Esophagus muscularis mucosa (tissue), 4 donors: ENCODE measurements at regions of chr16 and their contacts with region 1.

Region 1: GRCh38 chr16:76653390-76654026 is 376.3 kb downstream of the CNTNAP4 start:
- DNase-seq: no peak
- H3K4me3 ChIP-seq: no peak overlapping the region
- H3K27ac ChIP-seq: no peak overlapping the region
- H3K4me1 ChIP-seq: no peaks in the 10 kb centered on the region
- H3K27me3 ChIP-seq: no peaks in the 10 kb centered on the region
- CTCF ChIP-seq: peak in 2 of 3 experiments; percentile 23 to 52
- EP300 ChIP-seq: no peak
- POLR2A ChIP-seq: no peak

Region 2: GRCh38 chr16:75794426-75794825 is 859.1 kb before region 1 on chr16:
- intact Hi-C with region 1: loop called (anchors 5 kb)
- DNase-seq: no peak
- H3K4me3 ChIP-seq: no peak overlapping the region
- H3K27ac ChIP-seq: no peak overlapping the region
- H3K4me1 ChIP-seq: no peaks in the 10 kb centered on the region
- H3K27me3 ChIP-seq: peaks cover 0 to 4% (median 0%) of the 10 kb centered on the region in 4 donors
- CTCF ChIP-seq: no peak
- EP300 ChIP-seq: no peak
- POLR2A ChIP-seq: no peak

Region 3: DNA sequence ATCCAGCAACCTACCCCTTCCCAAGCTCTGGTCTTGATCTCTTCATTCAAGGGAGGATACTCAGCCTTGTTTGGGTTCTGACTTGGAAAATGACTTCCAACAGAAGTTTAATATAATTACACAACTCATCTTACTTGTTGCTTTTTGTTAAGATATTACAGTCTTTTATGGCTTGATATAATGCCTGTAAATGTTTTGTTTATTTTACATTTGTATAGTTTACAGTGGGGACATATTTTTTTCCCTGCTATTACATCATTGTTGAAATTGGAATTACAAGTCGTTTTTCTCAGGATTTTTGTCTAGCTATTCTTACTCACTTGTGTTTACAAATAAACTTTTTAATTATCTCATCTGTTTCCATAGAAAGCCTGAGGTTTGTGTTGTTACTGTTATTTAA is 59.7 kb after region 1 on chr16:
- intact Hi-C with region 1: no loop called
- DNase-seq: no peak
- H3K4me3 ChIP-seq: no peak overlapping the region
- H3K27ac ChIP-seq: no peak overlapping the region
- H3K4me1 ChIP-seq: no peaks in the 10 kb centered on the region
- H3K27me3 ChIP-seq: no peaks in the 10 kb centered on the region
- CTCF ChIP-seq: no peak
- EP300 ChIP-seq: no peak
- POLR2A ChIP-seq: no peak

Region 4: DNA sequence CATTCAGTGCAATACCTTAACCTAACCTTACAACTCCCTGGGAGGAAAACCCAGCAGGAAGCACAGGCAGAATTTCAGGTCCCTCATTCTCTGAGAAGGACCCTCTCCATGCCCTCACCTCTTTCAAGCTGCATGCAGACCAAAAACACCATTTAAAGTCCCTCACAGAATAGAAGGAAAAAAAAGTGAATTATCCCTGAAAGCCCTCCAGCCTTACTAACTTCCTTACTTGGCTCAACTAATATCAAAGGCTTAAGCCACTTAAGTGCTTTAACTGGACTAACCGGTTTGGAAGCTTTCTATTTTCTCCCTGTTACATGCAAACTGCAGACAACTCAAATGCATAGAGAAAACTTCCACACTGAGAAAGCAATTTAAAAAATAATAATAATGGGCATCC is 720.9 kb after region 1 on chr16:
- intact Hi-C with region 1: no loop called
- DNase-seq: no peak
- H3K4me3 ChIP-seq: no peak overlapping the region
- H3K27ac ChIP-seq: no peak overlapping the region
- H3K4me1 ChIP-seq: no peaks in the 10 kb centered on the region
- H3K27me3 ChIP-seq: no peaks in the 10 kb centered on the region
- CTCF ChIP-seq: no peak
- EP300 ChIP-seq: no peak
- POLR2A ChIP-seq: no peak